PC-9 (cell line): ENCODE measurements at regions of chr2 and their contacts with region 1.

Region 1: GRCh38 chr2:134118279-134119116 is 135.4 kb upstream of the MGAT5 start:
- DNase-seq: peak; percentile 76 to 85
- H3K4me3 ChIP-seq: no peak overlapping the region
- H3K27ac ChIP-seq: peak overlapping the region; percentile 30; the same call in 1 of the 2 replicates
- H3K4me1 ChIP-seq: peaks cover 12% of the 10 kb centered on the region
- H3K27me3 ChIP-seq: no peaks in the 10 kb centered on the region
- CTCF ChIP-seq: peak; percentile 81

Region 2: GRCh38 chr2:133886735-133887660 is 231.5 kb before region 1 on chr2:
- CTCF ChIA-PET with region 1: interaction called, 4 read pairs
- POLR2A ChIA-PET with region 1: no interaction called
- intact Hi-C with region 1: loop called (anchors 10 kb)
- DNase-seq: peak; percentile 41 to 49
- H3K4me3 ChIP-seq: no peak overlapping the region
- H3K27ac ChIP-seq: no peak overlapping the region
- H3K4me1 ChIP-seq: no peaks in the 10 kb centered on the region
- H3K27me3 ChIP-seq: peaks cover 95% of the 10 kb centered on the region
- CTCF ChIP-seq: peak; percentile 70

Region 3: DNA sequence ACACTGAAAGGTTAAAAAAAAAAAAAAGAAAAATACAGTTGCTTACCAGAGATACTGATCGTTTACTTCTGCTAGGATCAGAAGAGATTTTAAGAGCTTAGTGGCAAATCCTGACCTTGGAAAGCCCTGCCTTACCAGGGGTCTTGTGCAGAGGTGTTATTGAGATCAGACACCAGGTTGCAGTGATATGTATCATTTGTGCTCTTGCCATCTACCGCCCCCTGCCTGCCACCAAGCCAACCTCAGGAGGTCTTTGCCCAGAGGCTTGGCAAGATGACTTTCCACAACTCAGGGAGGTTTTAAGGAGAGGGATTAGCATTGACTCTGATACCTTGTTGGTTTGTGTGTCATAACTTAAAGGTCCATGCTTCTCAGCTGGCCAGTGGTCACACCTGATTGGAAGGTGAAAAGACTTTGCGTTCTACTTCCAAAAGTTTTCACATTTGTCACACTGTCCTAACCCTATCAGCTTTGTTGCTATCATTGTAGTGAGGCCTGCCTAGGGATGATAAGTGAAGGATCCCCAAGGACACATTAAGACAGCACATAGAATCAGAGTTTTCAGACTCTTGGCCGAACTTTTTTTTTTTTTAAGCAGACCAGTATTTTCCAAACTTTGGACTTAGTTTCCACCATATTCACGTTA is 89.2 kb after region 1 on chr2:
- CTCF ChIA-PET with region 1: interaction called, 6 read pairs
- POLR2A ChIA-PET with region 1: no interaction called
- intact Hi-C with region 1: loop called (anchors 5 kb)
- DNase-seq: peak in 1 of 2 experiments; percentile 46
- H3K4me3 ChIP-seq: no peak overlapping the region
- H3K27ac ChIP-seq: no peak overlapping the region
- H3K4me1 ChIP-seq: no peaks in the 10 kb centered on the region
- H3K27me3 ChIP-seq: no peaks in the 10 kb centered on the region
- CTCF ChIP-seq: peak; percentile 80

Region 4: DNA sequence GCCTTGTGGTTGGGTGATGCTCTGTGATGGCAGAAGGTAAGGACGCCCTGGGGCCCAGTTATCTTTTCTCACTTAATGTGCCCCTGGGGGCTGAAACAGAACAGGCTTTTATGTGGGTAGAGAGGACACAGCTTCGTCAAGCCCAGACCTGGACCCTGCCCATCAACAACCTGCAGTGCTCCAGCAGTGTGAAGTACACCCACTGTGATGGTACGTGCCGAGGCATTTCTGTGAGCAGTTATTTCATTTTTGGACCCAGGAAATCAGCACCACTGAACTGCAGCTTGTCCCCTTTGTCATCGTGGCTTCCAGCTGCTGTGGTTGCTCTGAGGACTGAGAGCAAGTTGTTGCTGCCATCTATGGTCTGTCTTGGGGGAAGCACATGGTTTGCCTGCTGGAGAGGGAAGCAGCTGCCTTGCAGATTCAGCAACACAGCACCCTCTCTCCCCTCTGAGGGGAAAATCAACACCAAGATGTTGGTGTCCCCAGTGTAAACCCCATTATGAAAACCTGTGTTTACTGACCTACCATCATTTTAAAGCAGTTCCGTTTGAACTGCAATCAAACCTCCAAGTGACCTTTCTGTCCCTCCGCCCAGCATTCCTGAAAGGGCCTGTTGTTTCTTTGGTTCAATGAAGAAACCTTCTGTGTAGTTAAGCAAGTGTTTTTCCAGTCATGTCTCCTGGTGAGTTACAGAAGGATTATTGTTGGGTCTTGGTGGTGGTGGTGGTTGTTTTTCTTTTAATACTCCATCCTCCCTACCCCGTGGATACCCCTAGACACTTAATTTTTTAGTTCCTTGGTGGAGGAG is 293.5 kb after region 1 on chr2:
- CTCF ChIA-PET with region 1: interaction called, 6 read pairs
- POLR2A ChIA-PET with region 1: interaction called, 3 read pairs
- intact Hi-C with region 1: loop called (anchors 1 kb)
- DNase-seq: peak; percentile 36 to 57
- H3K4me3 ChIP-seq: no peak overlapping the region
- H3K27ac ChIP-seq: no peak overlapping the region
- H3K4me1 ChIP-seq: peaks cover 2% of the 10 kb centered on the region
- H3K27me3 ChIP-seq: no peaks in the 10 kb centered on the region
- CTCF ChIP-seq: peak; percentile 70

Region 5: GRCh38 chr2:134918526-134919340 is 800.2 kb after region 1 on chr2 and contains the start of gene CCNT2:
- CTCF ChIA-PET with region 1: no interaction called
- POLR2A ChIA-PET with region 1: no interaction called
- intact Hi-C with region 1: loop called (anchors 10 kb)
- DNase-seq: peak; percentile 95 to 99
- H3K4me3 ChIP-seq: peak within 1 kb of the TSS; percentile 91
- H3K27ac ChIP-seq: peak within 1 kb of the TSS; percentile 94
- H3K4me1 ChIP-seq: peaks cover 27% of the 10 kb centered on the region
- H3K27me3 ChIP-seq: no peaks in the 10 kb centered on the region
- CTCF ChIP-seq: no peak
- total RNA-seq, gene CCNT2: 19.1 and 26.2 TPM in 2 replicates